Vagina (tissue), 2 donors: ENCODE measurements at regions of chr19 and their contacts with region 1.

Region 1: GRCh38 chr19:19366612-19367396 is 38.7 kb upstream of the GATAD2A start:
- DNase-seq: peak in 1 of 2 donors; percentile 87
- H3K4me3 ChIP-seq: no peak overlapping the region
- H3K27ac ChIP-seq: no peak overlapping the region
- H3K4me1 ChIP-seq: peaks cover 11% of the 10 kb centered on the region
- H3K27me3 ChIP-seq: no peaks in the 10 kb centered on the region
- CTCF ChIP-seq: peak; percentile 71 to 88 (median 83)
- POLR2A ChIP-seq: no peak

Region 2: DNA sequence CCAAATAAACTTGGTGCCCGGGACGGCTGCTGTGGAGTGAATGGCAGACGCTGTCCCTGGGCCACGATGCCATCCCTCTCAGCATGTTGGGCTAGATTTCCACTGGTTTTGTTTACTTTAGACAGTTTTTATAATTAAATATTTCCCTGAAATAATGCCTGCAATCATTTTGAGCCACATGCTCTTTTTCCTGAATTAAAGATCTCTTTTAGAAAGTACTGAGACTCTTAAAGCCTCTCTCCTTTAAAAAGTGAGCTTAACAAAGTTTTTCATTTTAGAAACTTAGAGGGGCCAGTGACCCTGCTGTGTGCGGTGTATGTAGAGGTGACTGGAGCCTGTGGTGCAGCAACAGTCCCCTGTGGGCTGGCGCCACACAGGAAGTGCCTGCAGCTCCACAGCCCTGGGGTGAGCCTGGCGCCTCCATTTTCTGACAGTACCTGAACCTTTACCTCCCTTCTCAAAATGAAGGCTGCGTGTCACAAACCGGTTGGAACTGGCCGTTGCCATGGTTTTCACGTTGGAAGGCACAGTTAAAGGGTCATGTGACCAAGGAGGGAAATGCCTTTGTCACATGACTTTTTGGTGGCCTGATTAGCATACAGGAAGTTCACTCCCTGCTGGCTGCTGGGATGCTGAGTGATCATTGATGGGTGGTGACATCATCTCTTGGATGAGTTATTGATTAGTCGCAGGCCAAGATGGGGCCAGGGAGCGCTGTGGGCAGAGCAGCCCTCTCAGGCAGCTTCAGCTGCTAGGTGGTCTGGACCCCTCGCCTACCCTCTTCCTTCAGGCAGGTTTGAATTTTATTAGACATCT is 122.3 kb after region 1 on chr19:
- intact Hi-C with region 1: loop called (anchors 5 kb)
- DNase-seq: no peak
- H3K4me3 ChIP-seq: peak overlapping the region; percentile 5 to 19
- H3K27ac ChIP-seq: peak overlapping the region; percentile 75
- H3K4me1 ChIP-seq: peaks cover 57% of the 10 kb centered on the region
- H3K27me3 ChIP-seq: no peaks in the 10 kb centered on the region
- CTCF ChIP-seq: peak in 1 of 3 experiments; percentile 24
- POLR2A ChIP-seq: no peak